BJ (cell line): ENCODE measurements at regions of chr12 and their contacts with region 1.

Region 1: GRCh38 chr12:55926738-55927587 is 731 bp downstream of the PYM1 start:
- DNase-seq: peak; percentile 72
- H3K4me3 ChIP-seq: peak overlapping the region; percentile 78
- H3K27me3 ChIP-seq: no peaks in the 10 kb centered on the region
- CTCF ChIP-seq: peak; percentile 91

Region 2: GRCh38 chr12:55829967-55830600 is 96.9 kb before region 1 on chr12:
- CTCF ChIA-PET with region 1: interaction called, 30 read pairs
- POLR2A ChIA-PET with region 1: no interaction called
- DNase-seq: no peak
- H3K4me3 ChIP-seq: peak overlapping the region; percentile 84
- H3K27me3 ChIP-seq: no peaks in the 10 kb centered on the region
- CTCF ChIP-seq: no peak

Region 3: DNA sequence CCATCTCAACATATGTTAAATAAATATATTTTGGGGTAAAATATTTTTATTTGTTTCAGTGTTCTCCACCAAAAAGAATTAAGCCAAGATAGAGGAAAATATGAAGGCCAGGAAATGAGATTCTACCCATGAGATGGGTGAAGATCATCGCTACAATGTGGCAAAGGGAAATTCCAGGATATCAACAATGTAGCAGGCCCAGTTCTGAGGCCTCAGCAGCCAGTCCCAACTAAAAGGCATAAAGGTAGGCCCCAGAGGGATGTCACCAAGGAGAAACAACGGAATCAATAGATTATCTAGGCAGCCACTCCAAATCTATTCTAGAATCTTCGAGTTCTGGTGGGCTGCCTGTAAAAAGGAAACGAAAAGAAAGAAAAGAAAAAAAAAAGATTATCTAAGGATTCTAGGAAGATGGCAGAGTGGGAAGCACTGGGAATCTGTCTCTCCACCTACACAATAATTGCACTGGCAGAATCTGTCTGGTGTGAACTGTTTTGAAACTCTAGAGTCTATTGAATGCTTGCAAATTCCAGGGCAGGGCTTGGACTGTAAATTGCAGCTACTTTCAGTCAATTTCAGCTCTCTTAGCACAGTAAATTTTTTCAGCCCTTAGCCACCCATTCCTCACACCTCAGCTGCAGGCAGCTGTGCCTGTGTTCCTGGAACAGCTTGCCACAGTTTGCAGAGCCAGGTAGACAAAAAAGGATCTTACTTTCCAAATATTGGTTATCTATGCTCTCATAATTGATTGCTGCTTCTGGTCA is 51.1 kb before region 1 on chr12:
- CTCF ChIA-PET with region 1: interaction called, 10 read pairs
- POLR2A ChIA-PET with region 1: no interaction called
- DNase-seq: no peak
- H3K4me3 ChIP-seq: no peak overlapping the region
- H3K27me3 ChIP-seq: no peaks in the 10 kb centered on the region
- CTCF ChIP-seq: no peak

Region 4: DNA sequence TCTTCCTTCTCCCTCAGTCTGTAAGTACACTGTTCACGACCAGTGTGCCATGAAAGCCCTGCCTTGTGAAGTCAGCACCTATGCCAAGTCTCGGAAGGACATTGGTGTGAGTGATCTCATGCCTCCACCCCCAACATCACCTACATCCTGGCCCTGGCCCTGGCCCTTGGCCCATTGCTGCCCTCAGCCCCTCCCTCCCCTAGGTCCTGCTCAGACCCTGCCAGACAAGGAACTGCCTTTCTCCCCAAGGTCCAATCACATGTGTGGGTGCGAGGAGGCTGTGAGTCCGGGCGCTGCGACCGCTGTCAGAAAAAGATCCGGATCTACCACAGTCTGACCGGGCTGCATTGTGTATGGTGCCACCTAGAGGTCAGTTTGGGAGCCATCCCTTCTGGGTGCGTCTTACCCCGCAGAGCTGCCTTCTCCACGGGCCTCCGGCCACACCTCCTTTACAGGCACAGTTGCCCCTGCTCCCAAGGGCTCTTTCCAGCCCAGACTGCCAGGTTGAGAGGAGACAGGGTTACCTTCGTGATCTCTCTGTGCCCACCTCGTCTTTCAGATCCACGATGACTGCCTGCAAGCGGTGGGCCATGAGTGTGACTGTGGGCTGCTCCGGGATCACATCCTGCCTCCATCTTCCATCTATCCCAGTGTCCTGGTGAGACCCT is 13.2 kb after region 1 on chr12:
- CTCF ChIA-PET with region 1: interaction called, 20 read pairs
- POLR2A ChIA-PET with region 1: no interaction called
- DNase-seq: no peak
- H3K4me3 ChIP-seq: no peak overlapping the region
- H3K27me3 ChIP-seq: no peaks in the 10 kb centered on the region
- CTCF ChIP-seq: peak; percentile 95

Region 5: GRCh38 chr12:56053407-56053893 is 126.5 kb after region 1 on chr12:
- CTCF ChIA-PET with region 1: no interaction called
- POLR2A ChIA-PET with region 1: no interaction called
- DNase-seq: no peak
- H3K4me3 ChIP-seq: no peak overlapping the region
- H3K27me3 ChIP-seq: no peaks in the 10 kb centered on the region
- CTCF ChIP-seq: no peak